GM12878 (cell line): ENCODE measurements at regions of chr16 and their contacts with region 1.

Region 1: DNA sequence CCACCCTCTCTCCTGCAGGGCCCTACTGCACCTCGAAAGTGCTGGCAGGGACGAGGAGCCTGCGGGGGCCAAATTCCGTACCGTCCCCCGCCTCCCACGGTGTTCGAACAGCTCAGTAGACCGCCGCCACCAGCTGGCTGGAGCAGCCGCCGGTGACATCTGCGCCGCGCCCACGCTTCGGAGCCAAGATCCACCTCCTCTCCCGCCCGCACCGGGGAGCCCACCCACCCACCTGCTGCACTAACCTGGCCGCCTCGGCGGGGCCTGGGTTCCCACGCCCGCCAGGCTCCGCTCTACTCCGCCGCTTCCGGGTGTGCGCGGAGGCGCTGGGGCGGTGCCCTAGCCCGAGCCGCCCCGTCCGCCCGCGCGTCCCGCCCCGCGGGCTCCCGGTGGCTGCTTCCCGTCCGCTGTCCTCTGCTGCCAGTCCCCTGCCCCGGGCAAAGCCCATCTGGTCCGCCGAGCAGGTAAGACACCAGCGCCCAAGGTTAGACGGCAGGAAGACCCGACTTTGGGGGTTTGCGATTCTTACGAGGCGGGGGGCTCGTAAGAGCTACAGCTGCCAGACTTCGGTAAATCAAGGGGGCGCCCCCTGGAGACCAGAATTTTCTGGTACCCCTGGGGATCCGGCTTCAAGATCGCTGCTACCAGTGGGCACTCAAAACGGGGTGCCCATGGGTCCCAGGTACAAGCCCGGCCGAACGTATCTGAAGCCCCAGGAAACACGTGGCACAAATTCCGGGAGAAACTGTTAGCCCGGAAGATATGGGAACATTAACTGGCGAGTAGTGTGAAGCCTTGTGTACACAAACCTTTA is at the starts of genes FBXL8 and TRADD:
- DNase-seq: no peak
- ATAC-seq: peak; percentile 75
- H3K4me3 ChIP-seq: peak within 1 kb of the TSS; percentile 95
- H3K27ac ChIP-seq: peak within 1 kb of the TSS; percentile 89
- H3K4me1 ChIP-seq: peaks cover 50% of the 10 kb centered on the region
- H3K27me3 ChIP-seq: peaks cover 0 to 7% of the 10 kb centered on the region in 2 experiments; a peak in 1 of 4 replicates
- CTCF ChIP-seq: peak; percentile 37 to 61 (median 50)
- EP300 ChIP-seq: no peak
- POLR2A ChIP-seq: peak; percentile 86
- RAD21 ChIP-seq: no peak
- polyA plus RNA-seq, gene FBXL8: not detected
- polyA plus RNA-seq, gene TRADD: 1.7 to 3.5 TPM

Region 2: DNA sequence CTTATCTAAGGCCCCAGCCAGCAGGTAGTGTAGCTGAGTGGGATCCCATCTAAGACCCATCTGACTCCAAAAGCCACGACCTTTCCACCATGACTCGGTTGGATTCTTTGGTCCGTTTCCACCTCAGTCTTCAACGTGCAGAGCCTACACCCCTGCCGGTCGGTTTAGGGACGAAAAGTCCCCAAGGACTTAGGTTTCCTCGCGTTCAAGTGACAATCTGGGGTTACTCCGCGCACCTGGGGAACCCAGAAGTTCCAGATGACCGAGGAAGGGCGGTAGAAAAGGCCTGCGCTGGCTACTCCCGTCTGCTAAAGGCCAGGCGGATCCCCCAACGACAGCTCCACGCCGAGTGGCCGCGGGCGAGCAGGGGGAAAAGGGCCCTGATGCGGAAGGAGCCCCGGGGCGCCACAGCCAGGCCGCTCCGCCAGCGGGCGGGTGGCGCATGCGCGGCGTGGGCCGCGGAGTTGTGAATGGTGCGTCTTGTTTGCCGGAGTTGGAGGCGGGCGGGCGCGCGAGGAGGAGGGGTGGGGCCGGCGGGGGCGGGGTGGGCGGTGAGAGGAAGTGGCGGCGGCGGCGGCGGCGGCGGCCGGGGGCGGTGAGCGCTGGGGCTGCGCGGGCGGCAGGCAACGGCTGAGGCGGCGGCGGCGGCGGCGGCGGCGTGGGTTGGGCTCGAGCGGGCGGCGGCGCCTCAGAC is 131.1 kb before region 1 on chr16 and contains the start of gene CBFB:
- CTCF ChIA-PET with region 1: interaction called, 14 read pairs
- POLR2A ChIA-PET with region 1: interaction called, 23 read pairs
- RAD21 ChIA-PET with region 1: interaction called, 8 read pairs
- SMC1A ChIA-PET with region 1: interaction called, 4 read pairs
- in situ Hi-C with region 1: no loop called
- intact Hi-C with region 1: no loop called
- DNase-seq: peak; percentile 75
- ATAC-seq: peak; percentile 89
- H3K4me3 ChIP-seq: peak within 1 kb of the TSS; percentile 72
- H3K27ac ChIP-seq: peak within 1 kb of the TSS; percentile 99
- H3K4me1 ChIP-seq: peaks cover 13% of the 10 kb centered on the region
- H3K27me3 ChIP-seq: no peaks in the 10 kb centered on the region
- CTCF ChIP-seq: no peak
- EP300 ChIP-seq: no peak
- POLR2A ChIP-seq: peak; percentile 98
- RAD21 ChIP-seq: no peak
- polyA plus RNA-seq, gene CBFB: 25.3 to 43.6 TPM

Region 3: GRCh38 chr16:67109407-67110135 is 50.2 kb before region 1 on chr16 and contains the start of gene PHAF1:
- CTCF ChIA-PET with region 1: interaction called, 98 read pairs
- POLR2A ChIA-PET with region 1: interaction called, 5 read pairs
- RAD21 ChIA-PET with region 1: interaction called, 22 read pairs
- SMC1A ChIA-PET with region 1: no interaction called
- in situ Hi-C with region 1: no loop called
- intact Hi-C with region 1: loop called (anchors 5 kb)
- DNase-seq: peak; percentile 76
- ATAC-seq: peak; percentile 95
- H3K4me3 ChIP-seq: peak within 1 kb of the TSS; percentile 95
- H3K27ac ChIP-seq: peak within 1 kb of the TSS; percentile 13; the same call in 1 of the 2 replicates
- H3K4me1 ChIP-seq: peaks cover 17% of the 10 kb centered on the region
- H3K27me3 ChIP-seq: no peaks in the 10 kb centered on the region
- CTCF ChIP-seq: no peak
- EP300 ChIP-seq: no peak
- POLR2A ChIP-seq: peak; percentile 83
- RAD21 ChIP-seq: no peak
- polyA plus RNA-seq, gene PHAF1: 4.5 to 6.1 TPM

Region 4: GRCh38 chr16:67173808-67174705 is 14.3 kb after region 1 on chr16:
- CTCF ChIA-PET with region 1: interaction called, 60 read pairs
- POLR2A ChIA-PET with region 1: interaction called, 137 read pairs
- RAD21 ChIA-PET with region 1: interaction called, 48 read pairs
- SMC1A ChIA-PET with region 1: interaction called, 48 read pairs
- in situ Hi-C with region 1: no loop called
- intact Hi-C with region 1: no loop called
- DNase-seq: no peak
- ATAC-seq: peak; percentile 70
- H3K4me3 ChIP-seq: peak overlapping the region; percentile 55
- H3K27ac ChIP-seq: no peak overlapping the region
- H3K4me1 ChIP-seq: peaks cover 44% of the 10 kb centered on the region
- H3K27me3 ChIP-seq: no peaks in the 10 kb centered on the region
- CTCF ChIP-seq: peak in 1 of 3 experiments; percentile 30; a peak in 2 of 6 replicates
- EP300 ChIP-seq: no peak; a peak in 1 of 4 replicates
- POLR2A ChIP-seq: peak; percentile 50
- RAD21 ChIP-seq: no peak

Region 5: GRCh38 chr16:67246934-67247697 is 87.3 kb after region 1 on chr16 and contains the start of gene FHOD1:
- CTCF ChIA-PET with region 1: interaction called, 5 read pairs
- POLR2A ChIA-PET with region 1: interaction called, 44 read pairs
- RAD21 ChIA-PET with region 1: interaction called, 5 read pairs
- SMC1A ChIA-PET with region 1: no interaction called
- in situ Hi-C with region 1: no loop called
- intact Hi-C with region 1: no loop called
- DNase-seq: peak; percentile 80
- ATAC-seq: peak; percentile 66
- H3K4me3 ChIP-seq: peak within 1 kb of the TSS; percentile 97
- H3K27ac ChIP-seq: peak within 1 kb of the TSS; percentile 98
- H3K4me1 ChIP-seq: peaks cover 33% of the 10 kb centered on the region
- H3K27me3 ChIP-seq: no peaks in the 10 kb centered on the region; a peak in 1 of 4 replicates
- CTCF ChIP-seq: no peak
- EP300 ChIP-seq: no peak
- POLR2A ChIP-seq: peak; percentile 86
- RAD21 ChIP-seq: no peak
- polyA plus RNA-seq, gene FHOD1: 9.0 to 17.7 TPM

Region 6: GRCh38 chr16:67311607-67312488 is 152.0 kb after region 1 on chr16:
- CTCF ChIA-PET with region 1: no interaction called
- POLR2A ChIA-PET with region 1: no interaction called
- RAD21 ChIA-PET with region 1: no interaction called
- SMC1A ChIA-PET with region 1: no interaction called
- in situ Hi-C with region 1: no loop called
- intact Hi-C with region 1: no loop called
- DNase-seq: peak; percentile 93
- ATAC-seq: peak; percentile 94
- H3K4me3 ChIP-seq: no peak overlapping the region
- H3K27ac ChIP-seq: peak overlapping the region; percentile 23
- H3K4me1 ChIP-seq: peaks cover 25% of the 10 kb centered on the region
- H3K27me3 ChIP-seq: no peaks in the 10 kb centered on the region
- CTCF ChIP-seq: no peak
- EP300 ChIP-seq: peak; percentile 77 to 91
- POLR2A ChIP-seq: no peak
- RAD21 ChIP-seq: no peak